Transverse colon (tissue), 4 donors: ENCODE measurements at regions of chr6 and their contacts with region 1.

Region 1: DNA sequence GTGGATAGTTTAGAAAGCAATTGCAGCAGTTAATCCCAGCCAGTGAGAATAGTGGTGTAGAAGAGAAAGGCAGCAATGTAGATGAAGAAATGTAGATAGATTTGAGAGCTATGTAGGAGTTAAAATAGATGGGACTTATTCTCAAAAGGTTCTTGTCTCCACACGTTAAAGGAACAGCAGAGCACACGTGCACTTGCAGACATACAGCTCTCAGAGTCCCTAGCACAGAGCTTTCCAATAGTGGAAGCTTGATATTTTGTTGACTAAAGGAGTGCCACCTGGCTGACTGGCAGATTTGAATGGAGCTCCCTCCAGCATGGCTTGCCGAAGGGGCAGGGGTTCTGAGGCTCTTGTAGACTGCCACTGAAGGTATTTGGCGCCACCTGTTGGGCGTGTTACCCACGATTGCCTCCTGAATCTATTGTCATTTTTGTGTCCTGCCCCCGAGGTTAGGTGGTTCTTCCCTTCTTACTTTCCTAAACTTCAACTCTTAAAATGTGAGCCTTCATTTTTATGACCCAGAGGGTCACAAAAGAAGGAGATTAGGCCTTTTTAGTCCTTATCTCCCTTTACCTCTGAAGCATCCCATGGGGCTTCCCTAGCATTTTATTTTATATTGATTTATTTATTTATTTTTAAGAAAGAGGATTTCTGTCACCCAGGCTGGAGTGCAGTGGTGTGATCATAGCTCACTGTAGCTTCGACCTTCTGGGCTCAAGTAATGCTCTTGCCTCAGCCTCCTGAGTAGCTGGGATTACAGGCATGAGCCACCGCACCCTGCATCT is 16.4 kb downstream of the BRD2 start:
- DNase-seq: peak; percentile 95
- H3K4me3 ChIP-seq: no peak overlapping the region
- H3K27ac ChIP-seq: peak overlapping the region; percentile 14 to 61 (median 43)
- H3K4me1 ChIP-seq: peaks cover 20 to 56% (median 43%) of the 10 kb centered on the region in 4 donors
- H3K27me3 ChIP-seq: no peaks in the 10 kb centered on the region
- CTCF ChIP-seq: peak; percentile 86 to 91 (median 88)
- EP300 ChIP-seq: no peak
- POLR2A ChIP-seq: no peak

Region 2: GRCh38 chr6:32816746-32817204 is 168.0 kb before region 1 on chr6 and contains the start of gene HLA-DOB:
- in situ Hi-C with region 1: no loop called
- intact Hi-C with region 1: no loop called
- DNase-seq: no peak
- H3K4me3 ChIP-seq: peak within 1 kb of the TSS in 1 of 4 donors; percentile 29
- H3K27ac ChIP-seq: peak within 1 kb of the TSS in 3 of 4 donors; percentile 42 to 57 (median 52)
- H3K4me1 ChIP-seq: no peaks in the 10 kb centered on the region
- H3K27me3 ChIP-seq: no peaks in the 10 kb centered on the region
- CTCF ChIP-seq: no peak
- EP300 ChIP-seq: no peak
- POLR2A ChIP-seq: no peak
- total RNA-seq, gene HLA-DOB: 5.7 TPM in 1 of 4 donors, not detected in the others

Region 3: DNA sequence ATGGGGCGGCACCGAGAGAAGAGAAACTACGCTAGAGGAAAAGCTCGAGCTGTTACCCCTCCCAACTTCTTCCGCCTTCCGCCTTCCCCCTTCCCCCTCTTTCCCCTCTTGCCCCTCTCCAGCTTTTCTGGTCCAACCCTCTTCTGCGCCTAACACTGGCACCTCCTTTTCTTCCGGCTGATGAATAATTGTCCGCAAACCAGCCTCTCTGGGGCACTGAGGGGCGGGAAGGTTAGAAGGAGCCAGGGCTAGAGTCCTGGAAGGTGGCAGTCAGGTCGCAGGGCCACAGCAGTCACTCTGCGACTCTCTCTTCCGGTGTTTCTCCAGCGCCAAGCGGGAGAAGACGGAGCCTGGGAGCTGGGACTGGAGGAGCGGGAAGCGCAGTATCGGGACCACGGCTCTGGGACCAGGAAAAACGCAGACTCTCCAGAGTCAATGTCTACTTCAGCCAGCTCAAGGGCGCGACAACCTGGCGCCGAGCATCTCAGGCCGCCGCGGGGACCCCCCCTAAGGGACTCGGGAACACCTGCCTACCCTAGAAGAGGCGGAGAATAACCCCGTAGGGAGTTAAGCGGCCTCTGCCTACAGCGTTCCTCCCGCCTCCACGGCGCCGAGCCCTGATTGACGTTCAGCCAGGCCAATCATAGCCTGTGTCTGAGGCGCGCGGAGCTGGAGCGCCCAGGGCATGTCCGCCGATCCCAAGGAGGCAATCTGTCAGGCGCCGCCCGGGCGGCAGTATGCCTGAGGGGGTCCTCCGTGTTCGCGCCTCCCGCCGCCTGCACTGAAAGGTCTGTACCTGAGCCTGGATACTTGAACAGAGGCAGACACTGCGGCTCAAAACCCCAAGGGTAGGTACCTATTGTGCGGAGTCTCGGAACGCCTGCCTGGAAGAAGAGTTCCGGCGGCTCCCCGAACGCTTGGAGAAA is 90.5 kb before region 1 on chr6:
- in situ Hi-C with region 1: loop called (anchors 5 to 25 kb)
- intact Hi-C with region 1: no loop called
- DNase-seq: peak; percentile 96
- H3K4me3 ChIP-seq: peak overlapping the region; percentile 39 to 88 (median 68)
- H3K27ac ChIP-seq: peak overlapping the region; percentile 92 to 99 (median 94)
- H3K4me1 ChIP-seq: peaks cover 3 to 19% (median 12%) of the 10 kb centered on the region in 4 donors
- H3K27me3 ChIP-seq: no peaks in the 10 kb centered on the region
- CTCF ChIP-seq: no peak
- EP300 ChIP-seq: no peak
- POLR2A ChIP-seq: peak; percentile 89

Region 4: GRCh38 chr6:32906539-32906938 is 78.3 kb before region 1 on chr6:
- in situ Hi-C with region 1: no loop called
- intact Hi-C with region 1: no loop called
- DNase-seq: no peak
- H3K4me3 ChIP-seq: no peak overlapping the region
- H3K27ac ChIP-seq: no peak overlapping the region
- H3K4me1 ChIP-seq: peaks cover 0 to 6% (median 0%) of the 10 kb centered on the region in 4 donors
- H3K27me3 ChIP-seq: no peaks in the 10 kb centered on the region
- CTCF ChIP-seq: no peak
- EP300 ChIP-seq: no peak
- POLR2A ChIP-seq: no peak

Region 5: GRCh38 chr6:32933636-32934085 is 51.1 kb before region 1 on chr6:
- in situ Hi-C with region 1: loop called in 2 of 4 experiments (anchors 10 kb)
- intact Hi-C with region 1: loop called (anchors 1 kb)
- DNase-seq: peak; percentile 85
- H3K4me3 ChIP-seq: no peak overlapping the region
- H3K27ac ChIP-seq: no peak overlapping the region
- H3K4me1 ChIP-seq: no peaks in the 10 kb centered on the region
- H3K27me3 ChIP-seq: no peaks in the 10 kb centered on the region
- CTCF ChIP-seq: peak; percentile 77 to 87 (median 85)
- EP300 ChIP-seq: no peak
- POLR2A ChIP-seq: no peak

Region 6: GRCh38 chr6:33112148-33112547 is 127.4 kb after region 1 on chr6:
- in situ Hi-C with region 1: no loop called
- intact Hi-C with region 1: no loop called
- DNase-seq: no peak
- H3K4me3 ChIP-seq: no peak overlapping the region
- H3K27ac ChIP-seq: no peak overlapping the region
- H3K4me1 ChIP-seq: peaks cover 0 to 4% (median 2%) of the 10 kb centered on the region in 4 donors
- H3K27me3 ChIP-seq: peaks cover 68% of the 10 kb centered on the region
- CTCF ChIP-seq: no peak
- EP300 ChIP-seq: no peak
- POLR2A ChIP-seq: no peak